Left ventricle myocardium inferior (tissue), 1 donor: ENCODE measurements at regions of chr2 and their contacts with region 1.

Region 1: DNA sequence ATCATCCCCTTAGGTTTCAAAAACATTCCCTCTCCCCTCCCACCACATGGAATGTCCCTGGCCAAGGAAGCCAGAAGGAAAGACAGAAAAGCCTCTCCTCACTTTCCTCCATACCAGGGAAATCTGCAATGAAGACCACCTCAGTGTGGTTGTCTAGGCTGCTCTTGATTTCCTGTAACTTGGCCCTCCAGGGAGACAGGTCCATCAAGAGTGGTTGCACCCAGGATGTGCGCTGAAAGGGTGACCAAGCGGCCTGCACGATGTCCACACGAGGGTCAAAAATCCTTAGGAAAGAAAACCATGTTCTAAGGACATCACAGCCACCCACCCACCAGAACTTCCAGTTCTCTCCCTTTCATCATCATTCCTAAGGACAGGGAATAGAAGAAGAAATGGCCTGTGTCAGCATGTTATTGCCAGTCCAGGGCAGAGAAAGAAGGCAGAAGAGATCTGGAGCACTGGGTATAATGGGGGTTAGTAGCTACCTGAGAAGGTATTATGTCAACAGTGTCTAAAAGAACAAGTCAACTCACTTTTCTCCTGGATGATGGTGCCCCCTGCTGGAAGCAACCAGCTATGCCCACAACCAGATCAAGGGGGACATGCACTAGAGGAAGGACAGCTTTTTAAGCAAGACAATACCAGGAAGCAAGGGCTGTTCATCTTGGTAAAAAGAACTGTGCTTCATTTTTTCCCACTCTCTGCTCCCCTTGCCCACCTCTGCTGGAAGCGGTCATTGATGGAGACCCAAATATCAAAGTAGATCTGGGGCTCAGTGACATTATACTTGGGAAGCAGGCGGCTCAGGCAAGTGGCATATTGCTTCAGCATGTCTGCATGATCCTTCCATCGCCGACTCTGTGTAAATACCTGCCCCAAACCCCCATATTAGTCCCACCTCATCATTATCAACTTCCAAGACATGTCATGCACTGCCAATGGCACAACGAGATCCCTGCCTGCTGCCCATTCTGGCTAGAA is 9.3 kb downstream of the GGCX start:
- DNase-seq: peak; percentile 79
- H3K4me3 ChIP-seq: no peak overlapping the region
- H3K27ac ChIP-seq: no peak overlapping the region
- H3K4me1 ChIP-seq: peaks cover 8% of the 10 kb centered on the region
- H3K27me3 ChIP-seq: no peaks in the 10 kb centered on the region
- CTCF ChIP-seq: peak; percentile 93

Region 2: DNA sequence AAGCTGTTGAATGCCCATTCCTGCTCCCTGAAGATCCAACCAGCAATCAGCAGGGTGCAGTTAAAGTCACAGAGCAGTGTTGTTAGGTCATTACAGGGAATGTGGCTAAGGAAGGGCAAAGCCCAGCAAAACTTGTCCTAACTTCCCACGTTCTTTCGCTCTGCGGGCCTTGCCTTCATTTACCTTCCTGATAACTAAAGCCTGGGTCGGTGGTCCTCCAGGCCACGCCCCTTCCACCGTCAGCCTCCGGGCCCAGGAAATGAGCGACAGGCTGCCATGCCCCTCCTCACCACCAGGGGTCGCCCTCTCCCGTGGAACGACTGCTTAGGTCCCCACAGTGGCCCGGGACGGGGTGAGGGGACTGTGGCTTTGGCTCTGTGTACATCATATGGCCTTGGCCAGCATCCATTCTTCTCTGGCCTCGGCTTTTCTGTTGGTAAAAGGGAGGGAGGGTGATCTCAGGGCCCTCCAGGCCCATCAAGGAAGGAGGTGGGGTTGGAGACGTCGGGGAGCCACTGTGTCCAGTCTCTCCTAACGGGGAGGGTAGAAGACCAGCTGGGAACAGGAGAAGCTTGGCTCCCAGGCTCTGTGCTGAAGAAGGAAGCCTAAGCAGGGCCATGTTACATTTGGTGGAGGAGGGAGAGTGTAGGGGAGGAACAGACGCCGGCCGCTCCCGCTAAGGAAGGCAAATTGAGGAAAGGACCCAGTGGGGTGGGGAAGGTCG is 131.3 kb before region 1 on chr2:
- intact Hi-C with region 1: loop called (anchors 2 kb)
- DNase-seq: peak; percentile 91
- H3K4me3 ChIP-seq: peak overlapping the region; percentile 32
- H3K27ac ChIP-seq: peak overlapping the region; percentile 97
- H3K4me1 ChIP-seq: peaks cover 42% of the 10 kb centered on the region
- H3K27me3 ChIP-seq: no peaks in the 10 kb centered on the region
- CTCF ChIP-seq: peak; percentile 100

Region 3: DNA sequence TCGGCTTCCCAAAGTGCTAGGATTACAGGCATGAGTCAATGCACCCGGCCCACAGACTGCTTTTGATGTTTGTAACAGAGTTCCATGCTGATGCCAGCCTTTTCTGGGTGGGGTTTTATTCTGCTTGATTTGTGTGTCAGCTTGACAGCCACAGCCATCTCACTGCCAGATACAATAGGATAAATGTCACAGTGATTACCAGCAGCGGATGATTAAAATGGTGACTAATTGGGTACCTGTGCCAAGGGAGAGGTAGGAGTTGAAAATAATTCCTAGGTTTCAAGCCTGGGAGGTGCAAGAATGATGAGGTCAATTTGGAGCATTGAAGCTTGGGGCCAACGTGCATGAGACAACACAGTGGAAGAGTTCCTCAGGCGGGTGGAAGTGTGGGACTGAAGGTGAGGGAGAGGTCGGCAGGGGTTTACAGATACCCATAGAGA is 94.1 kb before region 1 on chr2:
- intact Hi-C with region 1: no loop called
- DNase-seq: no peak
- H3K4me3 ChIP-seq: no peak overlapping the region
- H3K27ac ChIP-seq: no peak overlapping the region
- H3K4me1 ChIP-seq: no peaks in the 10 kb centered on the region
- H3K27me3 ChIP-seq: no peaks in the 10 kb centered on the region
- CTCF ChIP-seq: no peak